Activated CD8-positive, alpha-beta T cell treated with anti-CD3 and anti-CD28 coated beads for 36 hours (primary cell): ENCODE measurements at regions of chr2 and their contacts with region 1.

Region 1: DNA sequence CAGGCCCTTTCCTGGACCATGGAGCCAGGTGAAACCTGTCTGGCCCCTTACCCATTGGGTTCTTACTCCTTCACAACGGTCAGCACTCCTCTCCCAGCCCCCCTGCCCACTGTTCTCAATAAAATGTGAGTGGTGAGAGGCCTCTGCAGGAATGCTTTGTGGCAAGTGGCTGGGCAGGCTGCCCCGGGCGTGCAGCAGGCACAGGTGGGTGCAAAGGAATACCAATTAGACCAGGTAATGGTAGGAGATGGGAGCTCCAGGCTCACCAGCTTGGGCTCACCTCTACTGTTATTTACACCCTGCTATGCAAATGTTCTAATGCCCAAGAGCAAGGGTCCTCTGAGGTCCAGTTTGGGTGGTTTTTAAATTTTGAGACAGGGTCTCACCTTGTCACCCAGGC is 6.0 kb downstream of the PRADC1 start:
- DNase-seq: no peak
- ATAC-seq: no peak
- H3K4me3 Mint-ChIP-seq: no peak overlapping the region
- H3K27ac Mint-ChIP-seq: no peak overlapping the region
- H3K4me1 Mint-ChIP-seq: peaks cover 7% of the 10 kb centered on the region
- H3K27me3 Mint-ChIP-seq: no peaks in the 10 kb centered on the region
- CTCF ChIP-seq: no peak

Region 2: DNA sequence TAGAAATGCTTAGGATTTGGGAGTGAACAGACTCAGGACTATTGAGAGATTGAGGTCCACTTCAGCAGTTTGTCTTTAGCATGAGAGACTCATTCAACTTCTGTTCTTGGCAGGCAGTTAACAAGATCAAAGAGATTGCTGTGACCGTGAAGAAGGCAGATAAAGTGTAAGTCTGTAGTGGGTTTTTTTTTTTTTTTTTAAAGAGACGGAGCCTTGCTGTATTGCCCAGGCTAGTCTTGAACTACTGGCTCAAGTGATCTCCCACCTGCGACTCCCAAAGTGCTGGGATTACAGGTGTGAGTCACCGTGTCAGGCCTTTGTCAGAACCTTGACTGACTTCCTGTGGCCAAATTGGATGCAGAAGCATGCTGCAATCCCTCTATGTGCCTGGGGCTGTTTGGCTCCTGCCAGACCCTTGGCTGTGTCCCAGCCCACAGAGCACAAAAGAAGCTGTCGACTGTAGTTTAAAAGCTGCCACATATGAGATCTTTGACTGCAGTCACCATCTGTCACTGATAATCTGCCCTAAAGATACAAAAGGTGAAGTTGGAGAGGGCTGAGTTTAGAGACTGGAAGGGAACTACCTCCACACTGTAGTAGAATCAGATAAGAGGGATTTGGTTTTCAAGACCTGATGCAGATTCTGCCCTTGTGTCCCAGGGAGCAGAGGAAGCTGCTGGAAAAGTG is 16.9 kb after region 1 on chr2:
- CTCF ChIA-PET with region 1: interaction called, 3 read pairs
- POLR2A ChIA-PET with region 1: interaction called, 11 read pairs
- intact Hi-C with region 1: no loop called
- DNase-seq: no peak
- ATAC-seq: no peak
- H3K4me3 Mint-ChIP-seq: no peak overlapping the region
- H3K27ac Mint-ChIP-seq: peak overlapping the region; percentile 74
- H3K4me1 Mint-ChIP-seq: peaks cover 25% of the 10 kb centered on the region
- H3K27me3 Mint-ChIP-seq: no peaks in the 10 kb centered on the region
- CTCF ChIP-seq: no peak

Region 3: DNA sequence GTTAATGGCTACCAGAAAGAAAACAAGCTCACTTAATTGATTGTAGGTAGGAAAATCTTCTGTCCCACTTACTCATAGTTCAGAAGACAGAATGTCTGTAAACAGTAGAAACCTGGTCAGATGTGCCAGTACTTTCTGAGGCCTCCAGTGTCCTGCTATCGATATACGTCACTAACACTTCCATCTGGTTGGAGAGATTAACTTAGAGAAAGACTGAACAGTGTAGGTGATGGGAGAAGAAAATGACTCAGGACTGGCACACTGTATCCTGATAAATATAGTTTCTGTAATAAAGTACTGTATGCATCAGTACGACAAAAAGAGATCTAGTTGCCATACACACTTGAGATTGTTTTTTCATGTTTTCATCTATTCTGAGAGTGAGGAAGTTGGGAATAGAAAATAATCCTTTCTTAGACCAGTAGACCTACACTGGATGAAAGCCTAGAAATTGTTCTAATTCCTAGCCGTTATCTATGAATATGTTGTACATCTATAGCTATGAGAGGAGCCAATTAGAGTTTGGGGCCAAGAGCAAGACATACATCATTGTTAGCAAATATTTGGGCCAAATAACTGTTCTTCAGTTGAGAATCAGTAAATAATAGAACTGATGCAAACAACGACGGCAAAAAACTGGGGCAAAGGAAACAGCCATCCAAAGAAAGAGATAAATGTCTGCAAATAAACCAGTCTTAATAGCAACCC is 309.2 kb after region 1 on chr2:
- CTCF ChIA-PET with region 1: no interaction called
- POLR2A ChIA-PET with region 1: no interaction called
- intact Hi-C with region 1: no loop called
- DNase-seq: no peak
- ATAC-seq: no peak
- H3K4me3 Mint-ChIP-seq: no peak overlapping the region
- H3K27ac Mint-ChIP-seq: no peak overlapping the region
- H3K4me1 Mint-ChIP-seq: no peaks in the 10 kb centered on the region
- H3K27me3 Mint-ChIP-seq: no peaks in the 10 kb centered on the region
- CTCF ChIP-seq: no peak